ENCODE measurements at regions of chr5 and their contacts with region 1.

Region 1: GRCh38 chr5:142800776-142801494 is 30.8 kb downstream of the ARHGAP26 start:
- DNase-seq: peak; percentile 65
- H3K4me3 Mint-ChIP-seq: peak overlapping the region; percentile 48
- H3K27ac Mint-ChIP-seq: peak overlapping the region; percentile 77
- H3K4me1 Mint-ChIP-seq: peaks cover 60% of the 10 kb centered on the region
- H3K27me3 Mint-ChIP-seq: no peaks in the 10 kb centered on the region

Region 2: GRCh38 chr5:142783601-142784341 is 17.2 kb before region 1 on chr5:
- CTCF ChIA-PET with region 1: interaction called, 6 read pairs
- POLR2A ChIA-PET with region 1: interaction called, 43 read pairs
- DNase-seq: peak; percentile 74
- H3K4me3 Mint-ChIP-seq: peak overlapping the region; percentile 63
- H3K27ac Mint-ChIP-seq: peak overlapping the region; percentile 81
- H3K4me1 Mint-ChIP-seq: peaks cover 61% of the 10 kb centered on the region
- H3K27me3 Mint-ChIP-seq: no peaks in the 10 kb centered on the region

Region 3: GRCh38 chr5:142821733-142822487 is 21.0 kb after region 1 on chr5:
- CTCF ChIA-PET with region 1: interaction called, 8 read pairs
- POLR2A ChIA-PET with region 1: interaction called, 24 read pairs
- DNase-seq: no peak
- H3K4me3 Mint-ChIP-seq: no peak overlapping the region
- H3K27ac Mint-ChIP-seq: peak overlapping the region; percentile 45
- H3K4me1 Mint-ChIP-seq: peaks cover 69% of the 10 kb centered on the region
- H3K27me3 Mint-ChIP-seq: no peaks in the 10 kb centered on the region

Region 4: GRCh38 chr5:142959683-142960657 is 159.0 kb after region 1 on chr5:
- CTCF ChIA-PET with region 1: no interaction called
- POLR2A ChIA-PET with region 1: no interaction called
- DNase-seq: no peak
- H3K4me3 Mint-ChIP-seq: no peak overlapping the region
- H3K27ac Mint-ChIP-seq: no peak overlapping the region
- H3K4me1 Mint-ChIP-seq: peaks cover 18% of the 10 kb centered on the region
- H3K27me3 Mint-ChIP-seq: no peaks in the 10 kb centered on the region